Common myeloid progenitor, CD34-positive (primary cell): ENCODE measurements at regions of chr1 and their contacts with region 1.

Region 1: GRCh38 chr1:31335007-31335406 is 37.9 kb downstream of the FABP3 start:
- DNase-seq: peak; percentile 53 to 70 (median 67)
- H3K4me3 ChIP-seq: no peak overlapping the region
- H3K27ac ChIP-seq: no peak overlapping the region
- H3K4me1 ChIP-seq: peaks cover 0 to 4% (median 1%) of the 10 kb centered on the region in 4 experiments
- H3K27me3 ChIP-seq: no peaks in the 10 kb centered on the region

Region 2: DNA sequence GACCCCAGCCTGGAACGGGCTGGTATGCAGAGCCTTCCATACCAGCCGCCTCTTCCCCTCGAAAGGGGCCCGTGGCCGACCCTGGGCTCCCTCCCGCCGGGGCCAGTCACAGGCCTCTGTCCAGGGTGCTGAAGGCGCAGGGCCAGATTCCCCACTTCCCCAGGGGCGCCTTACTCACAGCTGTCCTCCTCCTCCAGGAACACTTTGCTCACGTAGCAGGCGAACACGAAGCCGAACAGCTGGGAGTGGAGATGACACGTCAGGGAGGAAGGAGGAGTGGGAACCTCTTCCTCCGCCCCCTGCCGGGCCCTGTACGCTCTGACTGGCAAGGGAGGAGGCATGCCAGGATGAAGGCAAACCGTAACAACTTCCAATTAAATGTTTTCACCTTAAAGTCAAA is 152.7 kb before region 1 on chr1:
- CTCF ChIA-PET with region 1: interaction called, 11 read pairs
- POLR2A ChIA-PET with region 1: no interaction called
- DNase-seq: peak; percentile 67 to 75 (median 73)
- H3K4me3 ChIP-seq: peak overlapping the region in 3 of 7 experiments; percentile 48 to 68 (median 62)
- H3K27ac ChIP-seq: no peak overlapping the region
- H3K4me1 ChIP-seq: peaks cover 0 to 14% (median 12%) of the 10 kb centered on the region in 4 experiments
- H3K27me3 ChIP-seq: peaks cover 0 to 15% (median 8%) of the 10 kb centered on the region in 5 experiments